Activated CD4-positive, alpha-beta T cell treated with anti-CD3 and anti-CD28 coated beads, Interleukin-2, amount 10 ng/mL, durations not matched to agents 24 days and 14 days (primary cell): ENCODE measurements at regions of chr11 and their contacts with region 1.

Region 1: GRCh38 chr11:64723117-64723906 is at the start of gene NRXN2:
- DNase-seq: peak; percentile 97
- H3K4me3 Mint-ChIP-seq: peak within 1 kb of the TSS; percentile 72
- H3K27ac Mint-ChIP-seq: peak within 1 kb of the TSS; percentile 41
- H3K4me1 Mint-ChIP-seq: peaks cover 14% of the 10 kb centered on the region
- H3K27me3 Mint-ChIP-seq: peaks cover 36% of the 10 kb centered on the region
- total RNA-seq, gene NRXN2: 0.61 TPM in 1 of 2 replicates, not detected in the other

Region 2: DNA sequence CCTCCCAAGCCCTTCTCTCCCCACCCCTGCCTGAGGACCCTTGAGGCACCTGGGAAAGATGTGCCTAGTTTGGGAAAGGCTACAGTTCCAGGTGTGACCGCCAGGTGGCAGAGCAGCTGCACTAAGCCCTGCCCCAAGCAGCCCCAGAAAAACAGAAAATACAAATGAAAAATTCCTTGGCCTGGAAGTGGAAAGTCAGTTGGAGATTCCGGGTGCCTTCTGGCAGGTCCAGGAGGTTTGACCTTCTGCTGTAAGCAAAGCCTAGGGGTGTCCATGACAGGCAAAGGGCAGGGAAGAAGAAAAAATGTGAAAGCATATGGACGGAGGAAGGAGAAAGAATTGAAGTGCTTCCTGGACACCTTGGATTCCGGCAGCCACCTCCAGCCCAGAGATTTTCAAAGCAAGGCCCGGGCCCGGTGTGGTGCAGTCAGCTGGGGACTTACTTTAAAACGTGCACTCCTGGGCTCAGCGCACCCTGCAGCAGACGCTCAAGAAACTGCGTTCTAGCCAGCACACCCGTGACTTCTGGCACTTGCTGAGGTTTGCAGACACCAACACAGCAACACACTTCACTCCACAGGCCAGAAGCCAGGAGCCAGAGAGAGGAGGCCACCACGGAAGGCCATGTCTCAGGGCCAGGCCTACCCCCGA is 169.6 kb before region 1 on chr11:
- intact Hi-C with region 1: loop called (anchors 5 kb)
- DNase-seq: peak; percentile 85
- H3K4me3 Mint-ChIP-seq: no peak overlapping the region
- H3K27ac Mint-ChIP-seq: no peak overlapping the region
- H3K4me1 Mint-ChIP-seq: no peaks in the 10 kb centered on the region
- H3K27me3 Mint-ChIP-seq: peaks cover 1% of the 10 kb centered on the region

Region 3: DNA sequence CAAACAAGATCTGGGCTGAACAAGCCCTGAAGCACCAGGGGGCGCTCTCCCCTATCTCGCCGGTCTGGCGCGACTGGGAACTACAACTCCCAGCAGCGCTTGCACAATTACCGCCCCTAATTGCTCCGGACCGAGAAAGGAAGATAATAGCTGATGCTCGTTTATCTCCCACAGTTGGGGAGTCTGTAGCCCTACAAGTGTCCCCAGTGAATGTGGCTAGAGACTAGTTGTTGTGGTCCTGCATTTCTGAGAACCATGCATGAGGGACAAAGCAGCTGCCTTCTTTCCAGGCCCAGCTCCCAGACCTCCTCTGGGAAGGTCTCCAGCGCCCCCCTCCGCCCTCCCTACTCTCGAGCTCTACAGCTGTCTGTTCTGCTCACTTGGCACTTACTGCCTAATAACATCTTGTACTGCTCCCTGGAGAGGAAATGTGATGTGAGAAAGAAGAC is 34.8 kb before region 1 on chr11:
- intact Hi-C with region 1: loop called (anchors 1 kb)
- DNase-seq: peak; percentile 97
- H3K4me3 Mint-ChIP-seq: peak overlapping the region; percentile 51
- H3K27ac Mint-ChIP-seq: no peak overlapping the region
- H3K4me1 Mint-ChIP-seq: peaks cover 16% of the 10 kb centered on the region
- H3K27me3 Mint-ChIP-seq: peaks cover 31% of the 10 kb centered on the region

Region 4: GRCh38 chr11:64778508-64779346 is 55.4 kb after region 1 on chr11 and contains the start of gene SF1:
- intact Hi-C with region 1: no loop called
- DNase-seq: peak; percentile 100
- H3K4me3 Mint-ChIP-seq: peak within 1 kb of the TSS; percentile 94
- H3K27ac Mint-ChIP-seq: peak within 1 kb of the TSS; percentile 98
- H3K4me1 Mint-ChIP-seq: peaks cover 49% of the 10 kb centered on the region
- H3K27me3 Mint-ChIP-seq: no peaks in the 10 kb centered on the region
- total RNA-seq, gene SF1: 522 and 525 TPM in 2 replicates